ENCODE measurements at regions of chr14 and their contacts with region 1.

Region 1: DNA sequence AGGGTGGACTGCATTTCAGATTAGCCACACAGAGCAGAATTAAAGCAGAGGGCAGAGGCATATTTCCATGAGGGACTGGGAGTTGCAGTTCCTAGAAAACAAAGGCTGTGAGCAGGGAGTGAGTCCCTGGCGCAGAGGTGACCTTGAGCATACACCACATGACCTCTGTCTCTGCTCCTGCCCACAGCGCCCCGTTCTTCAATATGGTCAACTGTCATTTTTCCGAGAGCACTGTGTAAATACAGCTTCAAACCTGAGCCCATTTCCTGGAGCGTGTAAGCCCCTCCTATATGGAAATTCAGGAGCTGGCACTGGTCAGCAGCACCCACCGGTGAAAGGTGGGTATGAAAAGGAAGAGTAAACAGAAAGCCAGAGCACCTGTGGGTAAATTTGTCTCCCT is 192.2 kb upstream of the PELI2 start:
- DNase-seq: no peak
- ATAC-seq: no peak
- H3K4me3 Mint-ChIP-seq: no peak overlapping the region
- H3K27ac Mint-ChIP-seq: no peak overlapping the region
- H3K4me1 Mint-ChIP-seq: no peaks in the 10 kb centered on the region
- H3K27me3 Mint-ChIP-seq: peaks cover 3% of the 10 kb centered on the region
- CTCF ChIP-seq: no peak

Region 2: DNA sequence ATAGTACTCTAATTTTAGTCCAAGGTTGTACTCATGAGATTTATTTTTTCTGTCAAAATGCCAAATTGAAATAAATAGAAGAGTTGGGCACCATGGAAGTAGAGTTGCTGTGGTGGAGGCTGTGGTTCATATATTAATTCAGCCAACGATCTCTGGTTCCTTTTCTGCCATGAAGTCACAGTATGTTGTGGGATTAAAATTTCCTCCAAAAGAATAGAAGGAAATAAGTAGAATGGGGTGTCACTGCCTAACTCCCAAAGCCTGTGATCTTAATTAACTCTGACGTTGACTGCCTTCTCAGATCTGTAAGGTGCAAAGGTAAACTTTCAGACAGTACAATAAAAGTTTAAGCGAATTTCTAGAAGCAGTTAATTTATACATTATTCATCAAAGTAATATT is 692.4 kb before region 1 on chr14:
- CTCF ChIA-PET with region 1: no interaction called
- POLR2A ChIA-PET with region 1: no interaction called
- intact Hi-C with region 1: loop called (anchors 5 kb)
- DNase-seq: no peak
- ATAC-seq: no peak
- H3K4me3 Mint-ChIP-seq: no peak overlapping the region
- H3K27ac Mint-ChIP-seq: no peak overlapping the region
- H3K4me1 Mint-ChIP-seq: peaks cover 4% of the 10 kb centered on the region
- H3K27me3 Mint-ChIP-seq: peaks cover 6% of the 10 kb centered on the region
- CTCF ChIP-seq: no peak

Region 3: DNA sequence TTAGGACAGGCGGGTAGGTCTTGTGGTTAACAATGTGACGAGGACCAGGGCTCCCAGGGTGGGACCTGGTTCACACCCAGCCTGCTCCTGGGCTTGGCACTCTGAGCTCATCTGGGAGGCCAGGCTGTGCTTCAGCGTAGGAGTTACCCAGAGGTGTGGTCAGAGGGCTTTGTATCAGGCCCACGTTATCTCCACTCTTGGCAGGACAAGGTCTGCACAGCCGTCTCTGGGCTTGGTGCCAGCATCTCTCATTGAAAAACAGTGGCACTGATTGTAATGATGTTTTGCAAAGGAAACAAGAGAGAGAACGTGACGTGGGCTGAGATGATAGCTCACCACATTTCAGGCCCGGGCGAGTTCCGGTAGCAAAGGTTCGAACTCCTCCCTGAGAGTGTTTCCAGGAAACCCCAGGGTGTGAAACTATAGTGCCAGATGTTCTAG is 118.9 kb before region 1 on chr14:
- CTCF ChIA-PET with region 1: no interaction called
- POLR2A ChIA-PET with region 1: no interaction called
- intact Hi-C with region 1: no loop called
- DNase-seq: no peak
- ATAC-seq: no peak
- H3K4me3 Mint-ChIP-seq: no peak overlapping the region
- H3K27ac Mint-ChIP-seq: no peak overlapping the region
- H3K4me1 Mint-ChIP-seq: peaks cover 5% of the 10 kb centered on the region
- H3K27me3 Mint-ChIP-seq: peaks cover 4% of the 10 kb centered on the region
- CTCF ChIP-seq: no peak

Region 4: GRCh38 chr14:55964091-55964490 is 38.1 kb after region 1 on chr14:
- CTCF ChIA-PET with region 1: no interaction called
- POLR2A ChIA-PET with region 1: no interaction called
- intact Hi-C with region 1: no loop called
- DNase-seq: no peak
- ATAC-seq: no peak
- H3K4me3 Mint-ChIP-seq: no peak overlapping the region
- H3K27ac Mint-ChIP-seq: no peak overlapping the region
- H3K4me1 Mint-ChIP-seq: no peaks in the 10 kb centered on the region
- H3K27me3 Mint-ChIP-seq: no peaks in the 10 kb centered on the region
- CTCF ChIP-seq: no peak

Region 5: DNA sequence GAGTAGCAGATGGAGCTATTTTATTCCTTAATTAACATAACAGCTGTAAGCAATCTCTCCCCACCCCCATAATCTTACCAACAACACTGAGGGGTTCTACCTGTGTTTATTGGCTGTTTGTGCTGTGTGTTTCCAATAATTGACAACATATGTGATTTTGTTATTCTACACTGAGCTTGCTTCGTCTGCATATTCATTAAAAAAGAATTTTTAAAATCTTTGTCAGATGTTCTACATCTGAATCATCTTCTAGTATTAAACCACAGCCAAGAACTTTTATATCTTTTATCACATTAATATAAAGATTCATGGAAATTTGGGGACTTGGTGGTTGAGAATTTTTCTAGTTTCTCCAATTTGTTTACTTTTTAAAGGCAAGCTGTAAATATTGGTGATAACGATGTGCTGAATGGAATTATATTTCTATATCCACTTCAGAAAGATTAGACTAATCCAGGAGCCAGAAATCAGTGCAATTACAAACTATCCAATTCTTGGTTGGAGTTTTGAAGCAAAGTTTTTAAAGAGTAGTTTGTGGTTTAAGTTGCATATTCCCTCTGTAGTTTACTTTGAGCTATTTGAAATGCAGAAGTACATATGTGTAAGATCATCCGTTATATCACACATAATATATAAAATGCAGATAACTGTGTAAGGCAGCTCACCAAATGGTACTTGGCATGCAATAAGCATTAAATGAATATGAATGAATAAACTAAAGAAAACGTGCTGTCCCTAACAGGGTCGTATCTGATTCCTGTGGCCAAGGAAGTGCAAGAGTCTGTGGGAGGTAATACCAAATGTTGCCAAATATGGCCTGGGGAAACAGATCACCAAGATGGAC is 399.1 kb after region 1 on chr14:
- CTCF ChIA-PET with region 1: no interaction called
- POLR2A ChIA-PET with region 1: no interaction called
- intact Hi-C with region 1: no loop called
- DNase-seq: no peak
- ATAC-seq: no peak
- H3K4me3 Mint-ChIP-seq: no peak overlapping the region
- H3K27ac Mint-ChIP-seq: no peak overlapping the region
- H3K4me1 Mint-ChIP-seq: no peaks in the 10 kb centered on the region
- H3K27me3 Mint-ChIP-seq: no peaks in the 10 kb centered on the region
- CTCF ChIP-seq: no peak